AG04450 (cell line): ENCODE measurements at regions of chr13 and their contacts with region 1.

Region 1: DNA sequence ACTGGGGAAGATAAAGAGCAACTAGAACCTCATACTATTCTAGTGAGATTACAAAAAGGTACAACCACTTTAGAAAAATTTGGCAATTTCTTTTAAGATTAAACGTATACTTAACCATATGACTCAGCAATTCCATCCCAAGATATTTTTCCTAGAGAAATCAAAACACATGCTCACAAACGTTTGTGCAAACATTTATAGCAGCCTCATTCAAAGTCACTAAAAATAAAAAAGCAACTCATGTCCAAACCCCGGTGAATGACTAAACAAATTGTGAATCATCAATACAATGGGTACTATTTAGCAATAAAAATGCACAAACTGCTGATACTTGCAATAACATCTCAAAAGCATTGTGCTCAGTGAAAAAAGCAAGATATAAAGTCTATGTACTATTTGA is 121.5 kb downstream of the FRY start:
- DNase-seq: peak; percentile 36
- H3K4me3 ChIP-seq: no peak overlapping the region
- H3K27ac ChIP-seq: peak overlapping the region; percentile 53
- H3K27me3 ChIP-seq: no peaks in the 10 kb centered on the region
- CTCF ChIP-seq: no peak

Region 2: DNA sequence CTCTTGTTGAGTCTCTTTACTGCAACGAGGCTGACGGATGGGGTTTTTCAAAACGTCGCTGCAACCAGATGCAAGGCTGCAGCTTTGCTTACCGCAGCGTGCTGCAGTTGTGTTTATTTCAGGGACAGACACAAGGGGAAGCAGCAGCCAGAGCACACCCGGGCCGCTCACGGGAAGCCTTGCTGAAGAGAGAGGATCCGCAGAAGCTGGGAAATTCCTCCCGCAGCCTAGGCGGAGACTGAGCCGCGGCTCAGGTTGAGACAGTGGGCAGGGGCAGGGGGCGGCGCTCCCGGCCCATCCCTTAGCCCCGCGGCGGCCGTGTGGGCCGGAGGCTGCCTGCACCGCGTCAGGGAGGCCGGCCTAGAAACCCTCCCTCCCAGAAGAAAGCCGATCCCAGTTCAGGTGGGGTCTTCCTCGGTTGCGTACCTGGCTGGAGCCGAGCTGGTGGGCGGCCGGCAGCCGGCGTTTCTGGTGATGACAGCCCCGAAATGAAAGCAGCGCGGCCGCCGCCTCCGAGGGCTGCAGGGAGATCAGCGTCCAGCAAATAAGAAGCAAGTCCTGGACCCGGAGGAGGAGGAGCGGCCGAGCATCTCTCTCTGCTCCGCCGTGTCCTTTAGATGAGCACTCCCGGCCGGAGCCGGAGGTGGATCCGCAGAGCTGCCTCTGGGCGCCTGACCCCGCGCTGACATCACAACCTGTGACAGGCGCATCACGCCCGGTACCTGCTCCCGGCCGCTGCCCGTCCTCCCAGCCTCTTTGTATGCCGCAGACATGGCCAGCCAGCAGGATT is 121.8 kb before region 1 on chr13 and contains the start of gene FRY:
- CTCF ChIA-PET with region 1: no interaction called
- POLR2A ChIA-PET with region 1: interaction called, 11 read pairs
- DNase-seq: no peak
- H3K4me3 ChIP-seq: peak within 1 kb of the TSS; percentile 77
- H3K27ac ChIP-seq: peak within 1 kb of the TSS; percentile 62
- H3K27me3 ChIP-seq: no peaks in the 10 kb centered on the region
- CTCF ChIP-seq: peak; percentile 20; the same call in 1 of the 2 replicates
- polyA plus RNA-seq, gene FRY: 24.6 and 37.8 TPM in 2 replicates